OCI-LY7 (cell line): ENCODE measurements at regions of chr20 and their contacts with region 1.

Region 1: GRCh38 chr20:35771689-35772562 is at the start of gene PHF20:
- DNase-seq: peak; percentile 96
- H3K4me3 ChIP-seq: peak within 1 kb of the TSS; percentile 93
- H3K27ac ChIP-seq: peak within 1 kb of the TSS; percentile 24
- H3K4me1 ChIP-seq: peaks cover 58% of the 10 kb centered on the region
- CTCF ChIP-seq: no peak
- total RNA-seq, gene PHF20: 37.9 and 43.6 TPM in 2 replicates

Region 2: GRCh38 chr20:35741892-35742740 is 29.8 kb before region 1 on chr20 and contains the start of gene RBM39:
- CTCF ChIA-PET with region 1: interaction called, 7 read pairs
- POLR2A ChIA-PET with region 1: interaction called, 76 read pairs
- intact Hi-C with region 1: loop called (anchors 1 kb)
- DNase-seq: peak; percentile 100
- H3K4me3 ChIP-seq: peak within 1 kb of the TSS; percentile 95
- H3K27ac ChIP-seq: peak within 1 kb of the TSS; percentile 96
- H3K4me1 ChIP-seq: peaks cover 42% of the 10 kb centered on the region
- CTCF ChIP-seq: peak; percentile 33; the same call in 1 of the 2 replicates
- total RNA-seq, gene RBM39: 346 and 448 TPM in 2 replicates

Region 3: DNA sequence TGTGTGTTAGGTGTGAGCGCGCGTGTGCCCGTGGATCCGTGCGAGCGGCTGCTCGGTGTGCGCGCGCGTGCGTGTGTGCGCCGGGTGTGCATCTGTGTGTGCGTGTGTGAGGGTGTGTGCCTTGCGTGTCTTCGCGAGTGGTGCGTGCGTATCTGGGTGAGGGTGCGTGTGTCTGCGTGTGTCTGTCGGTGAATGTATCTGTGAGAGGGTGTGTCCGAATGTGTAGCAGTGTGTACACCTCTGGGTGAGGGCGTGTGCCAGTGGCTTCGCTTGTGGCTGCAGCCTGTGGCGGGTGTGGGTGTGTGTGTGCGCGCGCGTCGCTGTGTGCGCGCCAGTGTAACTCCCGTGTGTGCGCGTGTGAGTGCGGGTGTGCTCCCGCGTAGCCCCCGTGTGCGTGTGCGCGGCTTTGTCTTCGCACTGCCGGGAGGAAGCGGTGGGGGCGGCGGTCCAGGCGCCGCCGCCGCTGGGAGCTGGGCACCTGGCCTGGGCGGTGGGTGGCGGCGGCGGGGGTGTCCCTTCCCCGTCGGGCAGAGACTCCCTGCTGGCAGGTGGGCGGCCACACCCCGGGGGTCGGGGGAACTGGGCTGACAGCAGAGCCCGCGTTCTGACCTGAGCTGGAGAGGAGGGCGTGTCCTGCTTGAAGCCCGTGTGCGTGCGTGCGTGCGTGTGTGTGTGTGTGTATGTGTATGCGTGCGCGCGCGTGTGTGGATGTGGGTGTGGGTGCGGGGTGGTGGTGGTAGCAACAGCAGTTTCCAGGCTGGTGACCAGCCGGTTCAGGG is 321.3 kb after region 1 on chr20:
- CTCF ChIA-PET with region 1: no interaction called
- POLR2A ChIA-PET with region 1: no interaction called
- intact Hi-C with region 1: loop called (anchors 10 kb)
- DNase-seq: no peak
- H3K4me3 ChIP-seq: peak overlapping the region; percentile 62
- H3K27ac ChIP-seq: no peak overlapping the region
- H3K4me1 ChIP-seq: peaks cover 44% of the 10 kb centered on the region
- CTCF ChIP-seq: no peak